IMR-90 (cell line): ENCODE measurements at regions of chr5 and their contacts with region 1.

Region 1: GRCh38 chr5:155943516-155944407 is 383.2 kb upstream of the SGCD start:
- DNase-seq: peak; percentile 70
- ATAC-seq: peak; percentile 96
- H3K4me3 ChIP-seq: no peak overlapping the region
- H3K27ac ChIP-seq: no peak overlapping the region
- H3K4me1 ChIP-seq: peaks cover 5% of the 10 kb centered on the region; the same call in 1 of the 2 replicates
- H3K27me3 ChIP-seq: no peaks in the 10 kb centered on the region
- CTCF ChIP-seq: peak; percentile 87
- POLR2A ChIP-seq: no peak
- RAD21 ChIP-seq: peak; percentile 93

Region 2: GRCh38 chr5:156051972-156052371 is 108.2 kb after region 1 on chr5:
- CTCF ChIA-PET with region 1: no interaction called
- POLR2A ChIA-PET with region 1: no interaction called
- dilution Hi-C with region 1: no loop called
- in situ Hi-C with region 1: no loop called
- intact Hi-C with region 1: loop called (anchors 2 kb)
- DNase-seq: no peak
- ATAC-seq: no peak
- H3K4me3 ChIP-seq: no peak overlapping the region
- H3K27ac ChIP-seq: no peak overlapping the region
- H3K4me1 ChIP-seq: no peaks in the 10 kb centered on the region
- H3K27me3 ChIP-seq: no peaks in the 10 kb centered on the region
- CTCF ChIP-seq: no peak
- POLR2A ChIP-seq: no peak
- RAD21 ChIP-seq: no peak

Region 3: GRCh38 chr5:156201788-156202403 is 258.1 kb after region 1 on chr5:
- CTCF ChIA-PET with region 1: no interaction called
- POLR2A ChIA-PET with region 1: no interaction called
- dilution Hi-C with region 1: no loop called
- in situ Hi-C with region 1: no loop called
- intact Hi-C with region 1: loop called (anchors 5 kb)
- DNase-seq: peak; percentile 83
- ATAC-seq: peak; percentile 97
- H3K4me3 ChIP-seq: no peak overlapping the region; the same call in 1 of the 2 replicates
- H3K27ac ChIP-seq: peak overlapping the region; percentile 85
- H3K4me1 ChIP-seq: peaks cover 7% of the 10 kb centered on the region
- H3K27me3 ChIP-seq: no peaks in the 10 kb centered on the region
- CTCF ChIP-seq: no peak
- POLR2A ChIP-seq: no peak
- RAD21 ChIP-seq: no peak

Region 4: GRCh38 chr5:156367597-156367996 is 423.8 kb after region 1 on chr5:
- CTCF ChIA-PET with region 1: no interaction called
- POLR2A ChIA-PET with region 1: no interaction called
- dilution Hi-C with region 1: no loop called
- in situ Hi-C with region 1: no loop called
- intact Hi-C with region 1: loop called (anchors 10 kb)
- DNase-seq: peak; percentile 97
- ATAC-seq: peak; percentile 100
- H3K4me3 ChIP-seq: no peak overlapping the region
- H3K27ac ChIP-seq: peak overlapping the region; percentile 8; the same call in 1 of the 2 replicates
- H3K4me1 ChIP-seq: peaks cover 4% of the 10 kb centered on the region; the same call in 1 of the 2 replicates
- H3K27me3 ChIP-seq: no peaks in the 10 kb centered on the region
- CTCF ChIP-seq: no peak
- POLR2A ChIP-seq: no peak
- RAD21 ChIP-seq: peak; percentile 28; the same call in 1 of the 2 replicates

Region 5: GRCh38 chr5:156475182-156476157 is 531.7 kb after region 1 on chr5:
- CTCF ChIA-PET with region 1: no interaction called
- POLR2A ChIA-PET with region 1: no interaction called
- dilution Hi-C with region 1: no loop called
- in situ Hi-C with region 1: no loop called
- intact Hi-C with region 1: loop called (anchors 10 kb)
- DNase-seq: peak; percentile 98
- ATAC-seq: peak; percentile 91
- H3K4me3 ChIP-seq: no peak overlapping the region
- H3K27ac ChIP-seq: peak overlapping the region; percentile 89; the same call in 1 of the 2 replicates
- H3K4me1 ChIP-seq: peaks cover 14% of the 10 kb centered on the region
- H3K27me3 ChIP-seq: no peaks in the 10 kb centered on the region
- CTCF ChIP-seq: peak; percentile 44
- POLR2A ChIP-seq: no peak
- RAD21 ChIP-seq: peak; percentile 48

Region 6: DNA sequence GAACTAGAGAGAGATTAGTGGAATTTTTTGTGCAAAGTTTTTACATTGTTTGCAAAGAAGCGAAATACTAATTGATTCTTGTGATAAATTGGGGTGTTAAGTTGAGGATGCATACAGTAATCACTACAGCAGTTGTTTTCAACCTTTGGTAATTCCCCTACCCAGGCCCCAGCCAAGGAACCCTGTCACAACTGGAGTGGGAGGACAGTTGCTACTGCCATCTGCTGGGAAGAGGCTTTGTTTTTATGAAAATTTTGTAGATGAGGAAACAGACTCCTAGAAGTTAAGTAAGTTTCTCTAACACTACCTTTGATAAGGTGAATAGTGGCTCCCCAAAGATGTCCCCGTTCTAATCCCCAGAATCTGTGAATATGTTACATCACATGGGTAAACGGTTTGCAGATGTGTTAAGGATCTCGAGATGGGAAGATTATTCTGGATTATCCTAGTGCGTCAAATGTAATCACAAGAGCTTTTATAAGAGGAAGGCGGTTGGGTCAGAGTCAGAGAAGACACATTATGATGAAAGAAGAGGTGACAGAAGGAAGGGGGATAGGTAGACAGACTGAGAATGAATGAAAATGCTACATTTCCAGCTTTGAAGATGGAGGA is 872.3 kb after region 1 on chr5:
- CTCF ChIA-PET with region 1: interaction called, 9 read pairs
- POLR2A ChIA-PET with region 1: no interaction called
- dilution Hi-C with region 1: no loop called
- in situ Hi-C with region 1: loop called (anchors 5 kb)
- intact Hi-C with region 1: loop called (anchors 1 kb)
- DNase-seq: peak; percentile 42
- ATAC-seq: peak; percentile 86
- H3K4me3 ChIP-seq: no peak overlapping the region
- H3K27ac ChIP-seq: no peak overlapping the region
- H3K4me1 ChIP-seq: no peaks in the 10 kb centered on the region; the same call in 1 of the 2 replicates
- H3K27me3 ChIP-seq: no peaks in the 10 kb centered on the region
- CTCF ChIP-seq: peak; percentile 65
- POLR2A ChIP-seq: no peak
- RAD21 ChIP-seq: peak; percentile 80

Region 7: DNA sequence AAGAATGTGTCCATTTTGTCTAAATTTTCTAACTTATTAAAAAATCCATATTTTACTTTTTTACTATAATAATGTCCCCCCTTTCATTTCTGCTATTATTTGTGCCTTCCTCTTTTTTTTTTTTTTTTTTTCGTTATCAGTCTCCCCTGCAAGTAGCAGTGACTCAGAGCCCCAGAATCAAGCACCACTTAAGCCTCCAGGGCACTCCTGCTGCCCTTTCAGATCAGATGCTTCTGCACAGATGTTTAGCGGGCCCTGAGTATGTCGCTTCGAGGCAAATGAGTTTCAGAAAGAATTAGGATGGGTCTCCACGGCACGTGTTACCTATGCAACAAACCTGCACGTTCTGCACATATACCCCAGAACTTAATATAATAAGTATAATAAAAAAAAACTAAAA is 1187.2 kb after region 1 on chr5:
- CTCF ChIA-PET with region 1: no interaction called
- POLR2A ChIA-PET with region 1: no interaction called
- dilution Hi-C with region 1: no loop called
- in situ Hi-C with region 1: loop called (anchors 25 kb)
- intact Hi-C with region 1: loop called (anchors 5 kb)
- DNase-seq: peak; percentile 21
- ATAC-seq: no peak
- H3K4me3 ChIP-seq: no peak overlapping the region
- H3K27ac ChIP-seq: no peak overlapping the region
- H3K4me1 ChIP-seq: no peaks in the 10 kb centered on the region
- H3K27me3 ChIP-seq: no peaks in the 10 kb centered on the region
- CTCF ChIP-seq: no peak
- POLR2A ChIP-seq: no peak
- RAD21 ChIP-seq: no peak